PC-3 (cell line): ENCODE measurements at regions of chr17 and their contacts with region 1.

Region 1: DNA sequence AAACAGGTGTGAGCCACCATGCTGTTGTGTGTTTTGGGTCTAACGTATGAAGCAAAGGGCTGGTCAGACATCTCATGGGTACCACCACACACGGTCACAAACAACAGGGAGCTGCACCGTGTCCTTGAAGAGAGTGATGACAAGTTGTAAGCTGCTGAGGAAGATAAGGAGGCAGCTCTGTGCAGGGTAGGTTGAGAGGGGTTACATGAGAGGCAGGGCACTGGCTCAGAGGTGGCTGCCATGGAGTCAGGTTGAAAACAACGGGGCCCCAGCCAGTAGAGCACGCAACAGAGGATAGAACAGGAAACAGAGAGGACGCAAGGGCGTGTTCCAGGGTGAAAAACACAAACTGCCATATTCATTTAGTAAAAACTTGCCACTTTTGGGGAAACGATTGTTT is 52.2 kb downstream of the TRARG1 start:
- DNase-seq: no peak
- ATAC-seq: no peak
- H3K4me3 ChIP-seq: no peak overlapping the region
- H3K27ac ChIP-seq: no peak overlapping the region
- H3K4me1 ChIP-seq: no peaks in the 10 kb centered on the region
- H3K27me3 ChIP-seq: no peaks in the 10 kb centered on the region
- CTCF ChIP-seq: no peak

Region 2: DNA sequence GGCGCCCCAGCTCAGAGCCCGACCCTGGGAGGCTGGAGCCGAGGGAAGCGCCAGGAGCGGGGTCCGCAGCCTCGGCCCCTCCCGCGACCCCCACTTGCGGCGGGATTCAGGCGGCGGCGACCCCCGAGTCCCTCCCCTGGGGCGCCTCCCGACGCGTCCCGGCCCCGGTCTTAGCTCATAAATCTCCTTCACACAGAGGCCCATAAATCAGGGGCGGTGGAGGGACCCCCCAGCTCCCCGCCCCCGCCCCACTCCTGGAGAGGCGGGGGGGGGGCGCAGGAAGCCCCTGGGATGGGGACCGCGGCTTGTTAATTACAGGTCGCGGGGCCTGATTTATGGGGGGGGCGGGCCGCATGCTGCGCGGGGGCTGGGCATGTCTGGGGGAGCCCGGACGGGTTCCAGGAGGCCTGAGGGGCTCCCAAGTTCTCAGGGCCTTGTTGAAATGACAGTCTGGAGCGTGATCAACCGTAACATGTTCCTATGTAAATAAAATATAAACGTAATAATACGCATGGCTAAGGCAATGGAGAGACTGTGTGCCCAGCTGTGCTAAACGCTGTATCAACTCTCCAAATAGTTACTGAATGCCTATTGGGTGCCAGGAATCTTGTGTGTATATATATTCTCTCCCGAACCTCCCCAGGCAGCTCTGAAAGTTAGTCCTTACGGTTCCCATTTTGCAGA is 71.5 kb before region 1 on chr17:
- CTCF ChIA-PET with region 1: no interaction called
- POLR2A ChIA-PET with region 1: no interaction called
- intact Hi-C with region 1: loop called (anchors 1 kb)
- DNase-seq: no peak
- ATAC-seq: no peak
- H3K4me3 ChIP-seq: peak overlapping the region; percentile 65; the same call in 1 of the 2 replicates
- H3K27ac ChIP-seq: no peak overlapping the region
- H3K4me1 ChIP-seq: no peaks in the 10 kb centered on the region
- H3K27me3 ChIP-seq: no peaks in the 10 kb centered on the region
- CTCF ChIP-seq: no peak

Region 3: DNA sequence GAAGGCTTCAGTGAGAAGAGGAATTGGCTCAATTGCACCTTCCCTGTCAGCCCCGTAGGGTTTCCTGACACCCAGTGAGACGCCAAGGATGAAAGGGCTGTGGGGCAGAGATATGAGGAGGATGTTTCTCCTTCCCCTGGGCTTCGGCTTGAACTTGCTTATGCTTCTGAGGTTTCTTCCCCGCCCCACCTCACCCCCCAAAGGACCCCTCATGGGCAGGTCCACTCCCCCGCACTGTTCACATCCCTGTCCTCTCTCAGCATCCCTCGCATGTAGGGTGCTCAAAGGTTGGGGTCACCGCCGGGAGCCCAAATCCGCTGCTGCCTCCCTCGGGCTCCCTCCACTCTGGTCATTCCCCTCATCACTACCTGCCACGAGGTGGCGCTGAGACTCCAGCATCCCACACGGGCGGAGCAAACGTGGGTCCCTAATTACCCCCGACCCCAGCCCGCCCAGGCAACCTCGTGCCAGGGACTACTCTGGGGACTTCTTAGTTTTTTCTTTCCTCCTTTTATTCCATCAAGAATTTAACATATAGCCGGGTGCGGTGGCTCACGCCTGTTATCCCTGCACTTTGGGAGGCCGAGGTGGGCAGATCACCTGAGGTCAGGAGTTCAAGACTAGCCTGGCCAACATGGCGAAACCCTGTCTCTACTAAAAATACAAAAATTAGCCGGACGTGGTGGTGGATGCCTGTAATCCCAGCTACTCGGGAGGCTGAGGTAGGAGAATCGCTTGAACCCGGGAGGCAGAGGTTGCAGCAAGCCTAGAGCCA is 55.6 kb before region 1 on chr17:
- CTCF ChIA-PET with region 1: no interaction called
- POLR2A ChIA-PET with region 1: no interaction called
- intact Hi-C with region 1: loop called (anchors 1 kb)
- DNase-seq: peak; percentile 50
- ATAC-seq: peak; percentile 67
- H3K4me3 ChIP-seq: no peak overlapping the region
- H3K27ac ChIP-seq: no peak overlapping the region
- H3K4me1 ChIP-seq: no peaks in the 10 kb centered on the region
- H3K27me3 ChIP-seq: no peaks in the 10 kb centered on the region
- CTCF ChIP-seq: peak; percentile 68

Region 4: DNA sequence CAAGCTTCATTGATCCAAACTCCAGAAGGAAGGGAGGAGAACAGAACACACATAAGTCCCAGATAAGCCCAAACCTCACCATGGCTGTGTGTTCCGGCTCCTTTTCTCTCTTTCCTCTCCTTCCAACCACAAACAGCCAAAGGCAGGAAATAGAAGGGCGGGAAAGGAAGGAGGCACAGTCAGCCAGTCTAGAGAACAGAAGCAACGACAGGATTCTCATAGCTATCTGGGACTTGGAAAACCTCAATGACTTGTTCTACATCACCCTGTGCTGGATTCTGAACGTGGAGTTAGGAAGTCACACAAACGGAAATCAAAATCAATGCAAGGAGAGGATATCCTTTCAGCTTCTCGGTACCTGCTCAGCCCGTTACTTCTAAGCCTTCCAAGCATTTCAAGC is 115.3 kb after region 1 on chr17:
- CTCF ChIA-PET with region 1: no interaction called
- POLR2A ChIA-PET with region 1: no interaction called
- intact Hi-C with region 1: no loop called
- DNase-seq: no peak
- ATAC-seq: no peak
- H3K4me3 ChIP-seq: no peak overlapping the region
- H3K27ac ChIP-seq: no peak overlapping the region
- H3K4me1 ChIP-seq: no peaks in the 10 kb centered on the region
- H3K27me3 ChIP-seq: no peaks in the 10 kb centered on the region
- CTCF ChIP-seq: no peak